ENCODE measurements at regions of chr1 and their contacts with region 1.

Region 1: GRCh38 chr1:239951511-239952140 is 140.1 kb upstream of the FMN2 start:
- DNase-seq: peak; percentile 17
- ATAC-seq: no peak
- H3K4me3 ChIP-seq: no peak overlapping the region
- H3K4me3 Mint-ChIP-seq: no peak overlapping the region
- H3K27ac ChIP-seq: no peak overlapping the region
- H3K27ac Mint-ChIP-seq: no peak overlapping the region
- H3K4me1 ChIP-seq: no peaks in the 10 kb centered on the region
- H3K4me1 Mint-ChIP-seq: no peaks in the 10 kb centered on the region
- H3K27me3 ChIP-seq: no peaks in the 10 kb centered on the region
- H3K27me3 Mint-ChIP-seq: no peaks in the 10 kb centered on the region
- CTCF ChIP-seq: peak; percentile 78

Region 2: GRCh38 chr1:239939602-239940001 is 12.0 kb before region 1 on chr1:
- CTCF ChIA-PET with region 1: interaction called, 16 read pairs
- POLR2A ChIA-PET with region 1: no interaction called
- intact Hi-C with region 1: no loop called
- DNase-seq: no peak
- ATAC-seq: no peak
- H3K4me3 ChIP-seq: no peak overlapping the region
- H3K4me3 Mint-ChIP-seq: no peak overlapping the region
- H3K27ac ChIP-seq: no peak overlapping the region
- H3K27ac Mint-ChIP-seq: no peak overlapping the region
- H3K4me1 ChIP-seq: no peaks in the 10 kb centered on the region
- H3K4me1 Mint-ChIP-seq: no peaks in the 10 kb centered on the region
- H3K27me3 ChIP-seq: no peaks in the 10 kb centered on the region
- H3K27me3 Mint-ChIP-seq: no peaks in the 10 kb centered on the region
- CTCF ChIP-seq: no peak

Region 3: DNA sequence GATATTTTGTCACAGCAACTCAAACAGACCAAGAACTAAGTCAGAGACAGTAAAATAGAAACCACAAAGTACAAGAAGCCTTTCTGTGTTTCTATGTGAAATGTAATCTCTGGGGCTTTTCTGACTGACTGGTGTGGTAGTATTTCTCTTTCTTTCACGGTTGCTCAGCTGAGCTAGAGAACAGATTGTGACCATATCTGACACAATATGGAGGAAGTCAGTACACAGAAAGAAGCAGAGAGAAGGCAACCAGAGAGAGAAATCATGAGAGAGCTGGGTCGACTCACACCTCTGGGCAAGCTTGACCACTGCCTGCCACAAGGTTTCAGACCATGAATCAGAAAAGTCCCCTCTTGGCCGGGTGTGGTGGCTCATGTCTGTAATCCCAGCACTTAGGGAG is 869.2 kb after region 1 on chr1:
- CTCF ChIA-PET with region 1: no interaction called
- POLR2A ChIA-PET with region 1: no interaction called
- intact Hi-C with region 1: no loop called
- DNase-seq: no peak
- ATAC-seq: no peak
- H3K4me3 ChIP-seq: no peak overlapping the region
- H3K4me3 Mint-ChIP-seq: no peak overlapping the region
- H3K27ac ChIP-seq: no peak overlapping the region
- H3K27ac Mint-ChIP-seq: no peak overlapping the region
- H3K4me1 ChIP-seq: no peaks in the 10 kb centered on the region
- H3K4me1 Mint-ChIP-seq: no peaks in the 10 kb centered on the region
- H3K27me3 ChIP-seq: no peaks in the 10 kb centered on the region
- H3K27me3 Mint-ChIP-seq: no peaks in the 10 kb centered on the region
- CTCF ChIP-seq: no peak

Measured in B cell (primary cell).